HepG2 (cell line): ENCODE measurements at regions of chr7 and their contacts with region 1.

Region 1: DNA sequence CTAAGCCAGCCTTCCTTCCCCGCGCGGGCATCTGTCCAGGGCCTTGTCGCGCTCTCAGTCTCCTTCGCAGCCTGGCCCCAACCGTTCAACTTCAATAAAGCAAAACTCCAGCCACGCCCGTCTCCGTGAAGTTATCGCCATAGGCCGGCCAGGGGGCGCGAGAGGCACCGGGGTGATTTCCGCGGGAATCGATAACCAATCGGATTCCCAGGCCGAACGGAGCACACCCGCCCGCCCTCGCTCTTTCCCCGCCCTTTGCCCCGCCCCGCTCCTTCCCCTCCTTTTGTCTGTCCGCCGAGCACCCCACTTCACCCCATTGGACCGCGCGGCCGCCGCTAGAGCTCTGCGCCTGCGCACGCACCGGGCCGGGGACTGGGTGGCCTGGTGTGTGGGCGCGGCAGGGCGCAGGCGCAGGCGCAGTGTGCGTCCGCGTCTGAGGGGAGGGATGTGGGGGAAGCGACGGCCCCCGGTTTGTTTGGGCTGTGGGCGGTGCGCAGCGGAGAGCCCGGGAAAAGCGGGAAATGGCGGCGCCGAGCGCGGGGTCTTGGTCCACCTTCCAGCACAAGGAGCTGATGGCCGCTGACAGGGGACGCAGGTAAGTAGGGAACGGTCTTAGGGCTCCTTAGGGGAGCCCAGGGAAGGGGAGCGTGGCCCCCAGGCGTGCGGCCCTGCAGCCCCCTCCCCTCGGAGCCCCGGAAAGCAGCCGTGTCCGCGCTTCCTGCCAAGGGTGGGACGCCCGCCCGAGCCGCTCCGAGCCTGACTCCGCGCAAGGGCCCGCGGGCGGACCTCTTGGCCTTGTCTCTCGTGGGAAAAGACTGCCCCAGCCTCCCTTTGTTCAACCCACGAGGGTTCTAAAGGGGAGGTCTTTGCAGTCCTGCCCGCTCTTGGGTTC is at the start of gene CASP2:
- DNase-seq: peak; percentile 89
- ATAC-seq: peak; percentile 68
- H3K4me3 ChIP-seq: peak within 1 kb of the TSS; percentile 72 to 80 (median 79)
- H3K27ac ChIP-seq: peak within 1 kb of the TSS; percentile 78
- H3K4me1 ChIP-seq: peaks cover 64% of the 10 kb centered on the region
- H3K27me3 ChIP-seq: no peaks in the 10 kb centered on the region; a peak in 1 of 5 replicates
- CTCF ChIP-seq: peak; percentile 50
- EP300 ChIP-seq: no peak
- POLR2A ChIP-seq: peak; percentile 87 to 92
- RAD21 ChIP-seq: peak; percentile 51
- total RNA-seq, gene CASP2: 13.7 and 21.2 TPM in 2 replicates

Region 2: DNA sequence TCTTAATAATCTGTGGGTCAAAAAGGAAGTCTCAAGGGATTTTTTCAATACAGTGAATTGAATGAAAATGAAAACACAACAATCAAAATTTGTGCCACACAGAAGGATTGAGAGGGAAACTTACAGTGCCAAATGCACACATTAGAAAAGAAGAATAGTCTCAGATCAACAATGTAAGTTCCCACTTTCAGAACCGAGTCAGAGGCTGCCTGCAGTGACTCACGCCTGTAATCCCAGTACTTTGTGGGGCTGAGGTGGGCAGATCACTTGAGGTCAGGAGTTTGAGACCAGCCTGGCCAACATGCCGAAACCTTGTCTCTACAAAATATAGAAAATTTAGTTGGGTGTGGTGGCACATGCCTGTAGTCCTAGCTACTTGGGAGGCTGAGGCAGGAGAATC is 313.6 kb before region 1 on chr7:
- CTCF ChIA-PET with region 1: no interaction called
- POLR2A ChIA-PET with region 1: no interaction called
- in situ Hi-C with region 1: no loop called
- intact Hi-C with region 1: no loop called
- DNase-seq: no peak
- ATAC-seq: no peak
- H3K4me3 ChIP-seq: no peak overlapping the region
- H3K27ac ChIP-seq: no peak overlapping the region
- H3K4me1 ChIP-seq: no peaks in the 10 kb centered on the region
- H3K27me3 ChIP-seq: no peaks in the 10 kb centered on the region
- CTCF ChIP-seq: no peak
- EP300 ChIP-seq: no peak
- POLR2A ChIP-seq: no peak
- RAD21 ChIP-seq: no peak

Region 3: GRCh38 chr7:143248761-143249354 is 39.3 kb before region 1 on chr7:
- CTCF ChIA-PET with region 1: no interaction called
- POLR2A ChIA-PET with region 1: no interaction called
- in situ Hi-C with region 1: no loop called
- intact Hi-C with region 1: loop called (anchors 2 kb)
- DNase-seq: peak; percentile 78
- ATAC-seq: peak; percentile 99
- H3K4me3 ChIP-seq: no peak overlapping the region
- H3K27ac ChIP-seq: peak overlapping the region; percentile 44
- H3K4me1 ChIP-seq: peaks cover 22% of the 10 kb centered on the region
- H3K27me3 ChIP-seq: no peaks in the 10 kb centered on the region
- CTCF ChIP-seq: no peak
- EP300 ChIP-seq: no peak; a peak in 1 of 4 replicates
- POLR2A ChIP-seq: no peak
- RAD21 ChIP-seq: no peak

Region 4: GRCh38 chr7:143263266-143264195 is 24.6 kb before region 1 on chr7 and contains the start of gene GSTK1:
- CTCF ChIA-PET with region 1: no interaction called
- POLR2A ChIA-PET with region 1: interaction called, 44 read pairs
- in situ Hi-C with region 1: no loop called
- intact Hi-C with region 1: loop called (anchors 2 kb)
- DNase-seq: peak; percentile 66
- ATAC-seq: peak; percentile 99
- H3K4me3 ChIP-seq: peak within 1 kb of the TSS; percentile 80 to 94 (median 94)
- H3K27ac ChIP-seq: peak within 1 kb of the TSS; percentile 92
- H3K4me1 ChIP-seq: peaks cover 41% of the 10 kb centered on the region
- H3K27me3 ChIP-seq: no peaks in the 10 kb centered on the region; a peak in 1 of 5 replicates
- CTCF ChIP-seq: peak; percentile 32
- EP300 ChIP-seq: peak in 1 of 2 experiments; percentile 22; a peak in 1 of 4 replicates
- POLR2A ChIP-seq: peak; percentile 88 to 98
- RAD21 ChIP-seq: peak; percentile 22
- total RNA-seq, gene GSTK1: 31.5 and 64.6 TPM in 2 replicates

Region 5: GRCh38 chr7:143305423-143306070 is 17.4 kb after region 1 on chr7:
- CTCF ChIA-PET with region 1: no interaction called
- POLR2A ChIA-PET with region 1: no interaction called
- in situ Hi-C with region 1: no loop called
- intact Hi-C with region 1: loop called (anchors 1 kb)
- DNase-seq: peak; percentile 44
- ATAC-seq: peak; percentile 97
- H3K4me3 ChIP-seq: no peak overlapping the region
- H3K27ac ChIP-seq: no peak overlapping the region
- H3K4me1 ChIP-seq: no peaks in the 10 kb centered on the region
- H3K27me3 ChIP-seq: no peaks in the 10 kb centered on the region
- CTCF ChIP-seq: peak; percentile 87
- EP300 ChIP-seq: no peak
- POLR2A ChIP-seq: no peak
- RAD21 ChIP-seq: peak; percentile 73

Region 6: DNA sequence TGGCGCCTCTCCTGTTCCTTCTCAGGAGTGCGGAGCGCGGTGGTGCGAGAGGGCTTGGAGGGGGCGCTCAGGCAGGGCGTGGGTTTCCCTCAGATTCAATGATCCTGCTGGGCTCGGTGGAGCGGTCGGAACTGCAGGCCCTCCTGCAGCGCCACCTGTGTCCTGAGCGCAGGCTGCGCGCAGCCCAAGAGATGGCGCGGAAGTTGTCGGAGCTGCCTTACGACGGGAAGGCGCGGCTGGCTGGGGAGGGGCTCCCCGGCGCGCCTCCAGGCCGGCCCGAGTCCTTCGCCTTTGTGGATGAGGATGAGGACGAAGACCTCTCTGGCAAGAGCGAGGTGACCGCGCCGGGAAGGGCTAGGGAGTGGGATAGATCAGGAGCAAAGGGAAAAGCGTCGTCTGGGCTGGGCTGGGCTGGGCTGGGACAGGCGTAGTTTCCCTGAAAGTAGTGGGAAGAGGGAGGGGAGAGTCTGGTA is 57.3 kb after region 1 on chr7:
- CTCF ChIA-PET with region 1: no interaction called
- POLR2A ChIA-PET with region 1: no interaction called
- in situ Hi-C with region 1: no loop called
- intact Hi-C with region 1: no loop called
- DNase-seq: no peak
- ATAC-seq: peak; percentile 98
- H3K4me3 ChIP-seq: no peak overlapping the region; a peak in 1 of 6 replicates
- H3K27ac ChIP-seq: no peak overlapping the region
- H3K4me1 ChIP-seq: no peaks in the 10 kb centered on the region
- H3K27me3 ChIP-seq: peaks cover 0 to 4% of the 10 kb centered on the region in 2 experiments; a peak in 1 of 5 replicates
- CTCF ChIP-seq: peak; percentile 64
- EP300 ChIP-seq: no peak
- POLR2A ChIP-seq: no peak
- RAD21 ChIP-seq: no peak